ENCODE measurements at regions of chr11 and their contacts with region 1.

Region 1: DNA sequence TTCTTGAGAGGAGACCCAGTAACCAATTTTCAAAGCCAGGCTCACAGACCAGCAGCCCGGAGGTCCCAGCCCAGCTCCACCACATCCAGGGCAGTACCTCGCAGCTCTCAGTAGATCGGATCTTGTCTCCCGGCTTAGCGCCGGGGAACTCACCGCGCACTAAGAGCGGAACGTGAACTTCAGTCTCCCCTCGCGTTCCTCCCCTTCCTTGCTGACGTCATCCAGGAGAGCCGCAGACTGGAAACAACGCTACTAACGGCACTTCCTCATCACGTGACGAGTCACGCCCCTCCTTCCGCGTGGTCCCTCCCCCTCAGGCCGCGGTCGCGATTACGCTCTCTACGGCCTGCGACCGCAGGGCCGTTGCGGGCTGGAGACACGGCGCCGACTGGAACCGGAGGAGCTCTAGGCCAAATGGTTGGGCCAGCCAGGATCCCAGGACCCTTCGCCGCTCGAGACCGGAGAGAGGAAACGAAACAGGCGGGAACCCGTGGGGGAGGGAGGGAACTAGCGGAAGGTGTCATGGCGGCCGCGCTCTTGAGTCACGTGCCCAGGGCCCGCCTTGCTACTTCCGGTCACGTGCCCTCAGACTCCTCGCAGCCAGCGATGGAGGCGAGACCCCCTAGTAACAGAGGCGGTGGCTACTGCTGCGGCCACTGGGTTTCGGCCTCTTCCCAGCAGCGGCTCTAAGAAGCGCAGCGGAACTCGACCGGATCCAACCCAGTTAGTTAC is at the starts of genes GTF2H1 and HPS5:
- DNase-seq: peak; percentile 93
- H3K4me3 Mint-ChIP-seq: peak within 1 kb of the TSS; percentile 92
- H3K27ac Mint-ChIP-seq: peak within 1 kb of the TSS; percentile 98
- H3K4me1 Mint-ChIP-seq: peaks cover 57% of the 10 kb centered on the region
- H3K27me3 Mint-ChIP-seq: no peaks in the 10 kb centered on the region
- total RNA-seq, gene GTF2H1: 51.4 and 54.3 TPM in 2 replicates
- total RNA-seq, gene HPS5: 33.3 and 34.2 TPM in 2 replicates

Region 2: DNA sequence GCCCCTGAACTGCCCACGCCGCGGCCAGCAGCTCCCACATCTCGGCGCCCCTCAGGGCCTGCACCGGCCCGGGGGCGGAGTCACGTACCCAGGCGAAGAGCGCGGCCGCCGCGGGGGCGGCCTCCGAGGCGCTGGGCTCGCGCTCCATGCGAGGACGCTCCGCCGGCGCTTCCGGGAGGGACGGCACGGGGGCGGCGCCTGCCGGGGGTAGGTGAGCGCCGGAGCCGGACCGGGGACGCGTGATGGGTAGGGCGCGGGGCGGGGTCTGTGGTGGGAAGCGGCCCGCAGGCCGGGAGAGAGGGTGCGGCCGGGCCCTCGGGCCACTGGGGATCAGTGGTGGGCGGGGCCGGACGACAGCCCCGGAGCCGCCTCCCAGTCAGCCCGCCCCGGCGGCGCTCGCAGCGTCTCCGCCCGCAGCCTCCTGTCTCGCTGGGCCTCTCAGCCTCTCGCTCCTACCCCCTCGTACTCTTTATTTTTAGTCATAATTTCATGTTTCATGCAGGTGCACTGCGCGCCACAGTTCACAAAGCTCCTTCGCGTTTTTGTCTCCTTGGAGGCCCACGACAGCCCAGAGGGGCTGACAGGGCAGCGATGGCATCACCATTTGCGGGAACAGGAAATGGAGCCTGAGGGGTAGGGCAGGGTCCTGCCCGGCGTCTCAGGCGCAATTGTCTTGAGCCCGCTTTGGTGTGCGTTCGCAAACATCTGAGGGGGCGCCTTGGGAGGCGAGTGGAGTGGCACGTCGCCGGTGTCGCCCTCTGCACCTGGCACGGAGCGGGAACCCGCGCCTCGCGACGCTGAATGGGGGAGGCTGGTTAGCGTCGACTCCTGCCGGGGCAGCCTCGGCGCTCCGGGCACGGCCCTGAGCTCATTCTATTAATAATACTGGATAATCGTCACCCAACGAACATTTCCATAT is 309.0 kb before region 1 on chr11 and contains the start of gene SERGEF:
- intact Hi-C with region 1: loop called (anchors 2 kb)
- DNase-seq: peak; percentile 93
- H3K4me3 Mint-ChIP-seq: peak within 1 kb of the TSS; percentile 99
- H3K27ac Mint-ChIP-seq: peak within 1 kb of the TSS; percentile 91
- H3K4me1 Mint-ChIP-seq: peaks cover 33% of the 10 kb centered on the region
- H3K27me3 Mint-ChIP-seq: no peaks in the 10 kb centered on the region
- total RNA-seq, gene SERGEF: 39.5 and 43.9 TPM in 2 replicates

Region 3: DNA sequence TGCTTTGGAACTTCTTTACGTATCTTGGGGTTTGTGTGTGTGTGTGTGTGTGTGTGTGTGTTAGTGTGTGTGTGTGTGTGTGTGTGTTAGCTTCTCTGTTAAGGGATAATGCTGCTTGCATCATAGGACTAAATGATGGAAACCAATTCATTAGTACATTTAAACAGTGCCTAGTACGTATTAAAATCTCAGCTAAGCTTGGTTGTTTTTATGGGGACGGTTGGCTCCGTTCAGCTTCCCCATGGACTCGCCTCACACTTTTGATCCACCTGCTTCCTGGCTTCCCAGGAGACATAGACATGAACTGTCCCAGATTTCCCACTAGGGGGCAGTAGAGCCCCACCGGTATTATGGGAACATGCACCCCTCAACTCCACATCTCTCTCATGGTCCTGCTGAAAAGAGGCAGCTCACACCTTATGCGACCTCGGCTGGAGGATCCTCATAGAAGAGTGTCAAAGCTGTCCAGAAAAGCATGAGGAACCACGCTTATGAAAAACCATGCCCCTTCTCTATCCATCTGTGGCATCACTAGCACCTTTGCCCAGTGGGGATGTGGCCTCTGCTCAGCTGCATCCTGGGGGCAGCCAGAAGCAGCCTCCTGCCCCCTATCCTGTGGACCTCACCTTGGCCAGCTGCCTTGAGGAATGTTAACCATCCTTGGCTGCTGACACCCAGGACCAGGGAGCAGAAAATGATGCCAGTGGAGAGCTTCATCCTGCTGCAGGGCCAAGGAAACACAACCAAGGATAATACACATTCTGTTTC is 206.6 kb before region 1 on chr11:
- intact Hi-C with region 1: loop called (anchors 10 kb)
- DNase-seq: peak; percentile 46
- H3K4me3 Mint-ChIP-seq: no peak overlapping the region
- H3K27ac Mint-ChIP-seq: no peak overlapping the region
- H3K4me1 Mint-ChIP-seq: peaks cover 2% of the 10 kb centered on the region
- H3K27me3 Mint-ChIP-seq: peaks cover 24% of the 10 kb centered on the region

Region 4: GRCh38 chr11:18243783-18244362 is 78.3 kb before region 1 on chr11:
- intact Hi-C with region 1: loop called (anchors 2 kb)
- DNase-seq: peak; percentile 63
- H3K4me3 Mint-ChIP-seq: no peak overlapping the region
- H3K27ac Mint-ChIP-seq: peak overlapping the region; percentile 54
- H3K4me1 Mint-ChIP-seq: peaks cover 25% of the 10 kb centered on the region
- H3K27me3 Mint-ChIP-seq: peaks cover 34% of the 10 kb centered on the region

Region 5: DNA sequence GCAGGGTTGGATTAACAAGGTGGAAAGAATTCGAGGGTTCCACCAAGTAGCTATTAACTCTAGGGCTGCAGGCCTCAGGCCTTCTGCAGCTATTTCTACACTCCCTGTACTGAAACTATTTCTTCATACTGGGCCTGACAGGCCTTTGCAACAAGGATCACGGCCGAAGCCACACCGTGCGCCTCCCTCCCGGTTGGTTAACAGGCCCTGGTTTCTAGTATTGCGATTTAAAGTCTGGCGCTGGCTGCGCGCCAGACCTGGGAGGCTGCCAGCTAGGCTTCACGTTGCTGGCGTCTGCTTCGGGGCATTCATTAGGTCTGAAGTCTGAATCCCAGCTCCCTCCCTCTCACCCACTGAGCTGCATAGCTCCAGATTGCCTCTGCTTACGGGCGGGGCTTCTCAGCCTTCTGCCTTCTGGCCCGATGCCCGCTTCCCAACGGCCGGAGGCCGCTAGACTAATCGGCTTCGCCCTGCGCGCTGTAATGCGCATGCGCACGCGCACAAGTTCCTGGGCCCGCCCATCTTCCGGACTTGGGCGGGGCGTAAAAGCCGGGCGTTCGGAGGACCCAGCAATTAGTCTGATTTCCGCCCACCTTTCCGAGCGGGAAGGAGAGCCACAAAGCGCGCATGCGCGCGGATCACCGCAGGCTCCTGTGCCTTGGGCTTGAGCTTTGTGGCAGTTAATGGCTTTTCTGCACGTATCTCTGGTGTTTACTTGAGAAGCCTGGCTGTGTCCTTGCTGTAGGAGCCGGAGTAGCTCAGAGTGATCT is 73.8 kb after region 1 on chr11:
- intact Hi-C with region 1: loop called (anchors 1 kb)
- DNase-seq: peak; percentile 97
- H3K4me3 Mint-ChIP-seq: peak overlapping the region; percentile 97
- H3K27ac Mint-ChIP-seq: peak overlapping the region; percentile 95
- H3K4me1 Mint-ChIP-seq: peaks cover 45% of the 10 kb centered on the region
- H3K27me3 Mint-ChIP-seq: no peaks in the 10 kb centered on the region

Measured in activated T-helper 2 cell treated with anti-CD3 and anti-CD28 coated beads, Interferon-gamma antibody, Interleukin-2, Interleukin-4, amounts not matched to agents 10 μg/mL and 5 μg/mL and 100 μg/mL, durations not matched to agents 14 hours and 24 hours and 36 hours (primary cell).